ENCODE measurements at regions of chr14 and their contacts with region 1.

Region 1: DNA sequence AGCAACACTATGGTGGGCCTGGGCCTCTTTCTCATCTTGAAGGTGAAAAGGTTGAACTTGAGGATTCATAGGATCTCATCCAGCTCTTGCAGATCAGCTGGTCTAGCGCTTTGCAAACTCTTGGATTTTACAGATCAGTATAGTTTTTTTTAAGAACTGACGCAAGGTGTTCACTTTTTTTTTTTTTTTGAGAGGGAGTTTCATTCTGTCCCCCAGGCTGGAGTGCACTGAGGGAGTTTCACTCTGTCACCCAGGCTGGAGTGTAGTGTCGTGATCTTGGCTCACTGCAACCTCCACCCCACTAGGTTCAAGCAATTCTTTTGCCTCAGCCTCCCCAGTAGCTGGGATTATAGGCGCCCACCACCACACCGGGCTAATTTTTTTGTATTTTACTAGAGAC is 20.4 kb upstream of the LGMN start:
- DNase-seq: no peak
- ATAC-seq: peak; percentile 16; the same call in 2 of the 3 replicates
- H3K4me3 ChIP-seq: no peak overlapping the region
- H3K27ac ChIP-seq: no peak overlapping the region
- H3K4me1 ChIP-seq: peaks cover 28% of the 10 kb centered on the region
- H3K27me3 ChIP-seq: peaks cover 0 to 2% of the 10 kb centered on the region in 2 experiments; a peak in 1 of 4 replicates
- CTCF ChIP-seq: no peak
- EP300 ChIP-seq: no peak
- POLR2A ChIP-seq: no peak
- RAD21 ChIP-seq: no peak

Region 2: DNA sequence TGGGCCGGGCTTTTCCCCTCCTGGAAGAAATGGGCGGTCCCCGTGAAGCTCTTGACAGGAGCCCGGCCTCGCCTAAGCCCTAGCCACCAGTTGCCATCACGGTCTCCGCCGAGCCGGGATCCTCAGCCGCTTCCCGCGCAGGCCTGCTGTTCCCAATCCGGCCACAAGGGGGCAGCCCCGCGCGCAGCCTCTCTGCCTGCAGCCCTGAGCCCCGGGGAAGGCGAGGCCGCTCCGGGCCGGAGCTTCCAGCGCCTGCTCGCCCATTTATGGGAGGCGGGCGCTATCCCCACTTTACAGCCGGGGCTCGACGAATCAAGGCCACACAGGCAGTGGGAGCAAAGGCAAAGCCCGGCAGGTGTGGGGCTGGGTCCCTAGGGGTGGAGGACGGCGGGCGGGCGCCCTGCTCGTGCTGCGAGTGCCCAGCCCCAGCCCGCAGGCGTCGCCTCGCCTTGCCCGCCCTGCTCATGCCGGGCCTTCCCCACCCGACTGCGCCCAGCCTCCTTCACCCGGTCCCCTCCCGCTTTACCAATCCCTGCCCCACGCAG is 81.8 kb before region 1 on chr14:
- CTCF ChIA-PET with region 1: no interaction called
- POLR2A ChIA-PET with region 1: no interaction called
- RAD21 ChIA-PET with region 1: no interaction called
- SMC1A ChIA-PET with region 1: no interaction called
- in situ Hi-C with region 1: no loop called
- intact Hi-C with region 1: no loop called
- DNase-seq: no peak
- ATAC-seq: peak; percentile 82
- H3K4me3 ChIP-seq: no peak overlapping the region
- H3K27ac ChIP-seq: no peak overlapping the region
- H3K4me1 ChIP-seq: no peaks in the 10 kb centered on the region
- H3K27me3 ChIP-seq: no peaks in the 10 kb centered on the region
- CTCF ChIP-seq: peak; percentile 78 to 89 (median 84)
- EP300 ChIP-seq: no peak
- POLR2A ChIP-seq: no peak
- RAD21 ChIP-seq: peak; percentile 64

Region 3: GRCh38 chr14:92729626-92730358 is 39.0 kb before region 1 on chr14:
- CTCF ChIA-PET with region 1: interaction called, 3 read pairs
- POLR2A ChIA-PET with region 1: interaction called, 3 read pairs
- RAD21 ChIA-PET with region 1: no interaction called
- SMC1A ChIA-PET with region 1: interaction called, 4 read pairs
- in situ Hi-C with region 1: no loop called
- intact Hi-C with region 1: loop called (anchors 2 kb)
- DNase-seq: no peak
- ATAC-seq: peak; percentile 93
- H3K4me3 ChIP-seq: 0 out of 2 replicates have a peak overlapping the region, but pooled peaks have one; percentile 28
- H3K27ac ChIP-seq: no peak overlapping the region; the same call in 1 of the 2 replicates
- H3K4me1 ChIP-seq: peaks cover 17% of the 10 kb centered on the region
- H3K27me3 ChIP-seq: no peaks in the 10 kb centered on the region
- CTCF ChIP-seq: no peak
- EP300 ChIP-seq: peak in 1 of 2 experiments; percentile 80; a peak in 2 of 4 replicates
- POLR2A ChIP-seq: no peak
- RAD21 ChIP-seq: 0 out of 2 replicates have a peak, but pooled peaks have one; percentile 1

Measured in GM12878 (cell line).